ENCODE measurements at regions of chr10 and their contacts with region 1.

Region 1: GRCh38 chr10:102835007-102835482 is 2.2 kb downstream of the CYP17A1 start:
- DNase-seq: peak; percentile 78
- ATAC-seq: peak; percentile 97

Region 2: DNA sequence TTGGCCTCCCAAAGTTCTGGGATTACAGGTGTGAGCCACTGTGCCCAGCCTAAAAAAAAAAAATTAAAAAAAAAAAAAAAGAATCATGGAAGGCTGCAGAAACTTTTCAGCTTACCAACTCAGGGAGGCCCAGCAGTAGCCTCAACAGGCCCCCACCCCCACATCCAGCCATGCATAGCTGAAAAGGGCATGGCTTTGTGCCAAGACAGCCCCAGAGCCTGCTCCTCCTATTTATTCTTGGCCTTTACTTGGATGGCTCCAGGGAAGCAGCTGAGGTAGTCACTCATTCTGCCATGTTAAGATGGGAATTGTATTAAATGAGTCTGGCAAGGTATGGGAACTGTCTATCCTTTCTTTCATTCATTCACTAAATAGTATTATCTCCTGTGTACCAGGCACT is 69.3 kb after region 1 on chr10:
- intact Hi-C with region 1: loop called (anchors 5 kb)
- DNase-seq: no peak
- ATAC-seq: no peak

Region 3: GRCh38 chr10:103069453-103070331 is 234.6 kb after region 1 on chr10:
- intact Hi-C with region 1: loop called (anchors 5 kb)
- DNase-seq: peak; percentile 68
- ATAC-seq: peak; percentile 84

Region 4: GRCh38 chr10:103244663-103245271 is 409.7 kb after region 1 on chr10:
- intact Hi-C with region 1: loop called (anchors 5 kb)
- DNase-seq: peak; percentile 71
- ATAC-seq: peak; percentile 94

Measured in Right ventricle myocardium superior (tissue), 1 donor.